ENCODE measurements at regions of chr3 and their contacts with region 1.

Region 1: GRCh38 chr3:30606301-30607031 is at the start of gene TGFBR2:
- DNase-seq: peak; percentile 88
- ATAC-seq: peak; percentile 73
- H3K4me3 Mint-ChIP-seq: peak within 1 kb of the TSS; percentile 93
- H3K27ac Mint-ChIP-seq: peak within 1 kb of the TSS; percentile 98
- H3K4me1 Mint-ChIP-seq: peaks cover 56% of the 10 kb centered on the region
- H3K27me3 Mint-ChIP-seq: no peaks in the 10 kb centered on the region
- total RNA-seq, gene TGFBR2: 86.9 to 92.2 TPM

Region 2: DNA sequence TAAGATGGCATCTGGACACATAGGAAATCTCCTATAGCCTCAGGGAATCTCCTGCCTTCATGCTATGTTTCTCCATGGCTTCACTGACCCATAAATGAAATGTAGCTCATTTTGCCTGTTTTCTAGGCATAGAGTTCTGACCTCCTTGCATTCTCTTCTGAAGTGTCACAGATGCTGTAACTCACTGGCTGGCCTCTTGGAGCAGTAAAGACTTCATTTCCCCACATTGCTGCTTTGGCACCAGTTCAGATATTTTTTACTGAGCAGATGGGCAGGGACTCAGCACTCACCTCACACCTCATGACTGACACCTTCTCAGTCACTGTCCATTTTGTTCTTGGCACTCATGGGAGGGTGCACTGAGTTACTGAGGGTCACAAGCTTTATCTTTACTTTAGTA is 286.8 kb before region 1 on chr3:
- POLR2A ChIA-PET with region 1: no interaction called
- DNase-seq: no peak
- ATAC-seq: peak; percentile 90
- H3K4me3 Mint-ChIP-seq: no peak overlapping the region
- H3K27ac Mint-ChIP-seq: peak overlapping the region; percentile 20
- H3K4me1 Mint-ChIP-seq: peaks cover 4% of the 10 kb centered on the region
- H3K27me3 Mint-ChIP-seq: no peaks in the 10 kb centered on the region

Region 3: GRCh38 chr3:30548600-30548999 is 57.9 kb before region 1 on chr3:
- POLR2A ChIA-PET with region 1: no interaction called
- DNase-seq: peak; percentile 38
- ATAC-seq: peak; percentile 39
- H3K4me3 Mint-ChIP-seq: no peak overlapping the region
- H3K27ac Mint-ChIP-seq: no peak overlapping the region
- H3K4me1 Mint-ChIP-seq: peaks cover 1% of the 10 kb centered on the region
- H3K27me3 Mint-ChIP-seq: no peaks in the 10 kb centered on the region

Region 4: DNA sequence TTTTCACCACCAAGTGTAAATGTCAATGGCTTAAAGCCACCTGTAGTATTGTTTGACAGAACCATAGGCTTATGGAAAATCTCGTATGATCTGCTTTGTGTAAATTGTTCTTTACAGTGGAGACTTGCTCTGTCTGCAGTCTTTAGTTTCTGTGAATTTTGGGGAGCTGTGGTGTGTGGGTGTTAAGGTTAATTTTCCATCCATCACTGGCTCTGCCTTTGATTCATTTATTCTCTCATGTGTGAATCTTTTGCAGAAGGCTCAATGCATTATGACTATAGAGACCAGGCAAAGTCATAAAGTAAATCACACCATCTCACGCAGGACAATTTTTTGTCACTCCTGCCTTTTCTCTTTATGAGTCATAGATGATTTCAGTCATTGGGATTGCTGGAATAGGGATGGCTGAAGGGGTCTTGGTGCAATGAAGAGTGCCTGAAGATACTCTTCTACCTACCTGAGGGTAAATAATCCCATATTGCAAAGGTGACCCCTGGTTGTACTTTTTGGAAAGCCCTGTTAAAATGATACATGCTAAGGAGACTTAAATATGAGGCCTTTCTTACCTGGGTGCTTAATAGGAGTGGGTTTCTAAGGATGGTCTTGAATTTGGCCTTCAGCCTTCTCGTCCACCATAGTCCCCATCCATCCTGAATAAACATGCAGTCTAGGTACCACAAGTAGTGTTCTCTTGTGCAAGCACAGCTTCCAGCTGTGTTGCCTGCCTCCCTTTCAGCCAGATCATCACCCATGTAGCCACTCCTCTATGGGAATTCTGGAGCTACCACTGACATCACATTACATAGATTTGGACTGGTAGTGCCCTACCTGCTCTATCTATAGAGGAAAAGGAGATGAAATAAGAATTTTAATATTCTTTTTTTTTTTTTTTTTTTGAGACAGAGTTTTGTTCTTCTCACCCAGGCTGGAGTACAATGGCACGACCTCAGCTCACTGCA is 14.2 kb after region 1 on chr3:
- POLR2A ChIA-PET with region 1: interaction called, 82 read pairs
- DNase-seq: no peak
- ATAC-seq: peak; percentile 41
- H3K4me3 Mint-ChIP-seq: peak overlapping the region; percentile 65
- H3K27ac Mint-ChIP-seq: peak overlapping the region; percentile 86
- H3K4me1 Mint-ChIP-seq: peaks cover 86% of the 10 kb centered on the region
- H3K27me3 Mint-ChIP-seq: no peaks in the 10 kb centered on the region

Region 5: DNA sequence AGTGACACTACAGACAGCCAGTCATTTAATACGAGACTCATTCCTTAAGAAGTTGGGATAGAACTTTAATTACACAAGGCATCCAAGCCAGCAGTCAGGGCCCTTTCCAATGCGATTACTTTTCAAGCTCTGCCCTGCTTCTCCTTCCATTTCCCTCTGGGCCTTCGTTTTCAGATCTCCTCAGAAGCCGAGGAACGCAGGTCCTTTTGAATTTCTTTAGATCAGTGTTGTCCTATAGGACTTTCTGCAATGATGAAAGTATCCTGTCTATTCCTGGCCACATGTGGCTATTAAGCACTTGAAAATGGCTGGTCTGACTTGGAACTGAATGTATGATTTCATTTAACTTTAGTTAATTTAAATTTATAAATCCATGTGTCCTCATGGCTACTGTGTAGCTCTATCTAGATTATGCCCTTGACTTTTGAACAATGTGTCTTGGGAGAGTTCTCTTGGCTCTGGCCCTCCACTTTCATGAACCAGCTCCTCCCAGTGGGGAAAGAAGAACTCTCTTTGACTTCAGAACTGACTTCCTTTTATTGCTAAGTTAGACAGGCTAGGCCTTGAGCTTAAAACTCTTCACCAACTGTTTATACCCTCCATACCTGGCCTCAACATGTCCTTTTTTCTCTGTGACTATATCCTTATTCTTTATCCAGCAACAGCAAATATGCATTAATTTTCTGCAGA is 22.6 kb after region 1 on chr3:
- POLR2A ChIA-PET with region 1: interaction called, 45 read pairs
- DNase-seq: no peak
- ATAC-seq: peak; percentile 49
- H3K4me3 Mint-ChIP-seq: peak overlapping the region; percentile 61
- H3K27ac Mint-ChIP-seq: peak overlapping the region; percentile 89
- H3K4me1 Mint-ChIP-seq: peaks cover 81% of the 10 kb centered on the region
- H3K27me3 Mint-ChIP-seq: no peaks in the 10 kb centered on the region

Region 6: GRCh38 chr3:30634761-30635735 is 28.6 kb after region 1 on chr3:
- POLR2A ChIA-PET with region 1: interaction called, 45 read pairs
- DNase-seq: no peak
- ATAC-seq: peak; percentile 18
- H3K4me3 Mint-ChIP-seq: peak overlapping the region; percentile 60
- H3K27ac Mint-ChIP-seq: peak overlapping the region; percentile 87
- H3K4me1 Mint-ChIP-seq: peaks cover 86% of the 10 kb centered on the region
- H3K27me3 Mint-ChIP-seq: no peaks in the 10 kb centered on the region

Region 7: GRCh38 chr3:30644593-30645012 is 38.1 kb after region 1 on chr3:
- POLR2A ChIA-PET with region 1: interaction called, 31 read pairs
- DNase-seq: no peak
- ATAC-seq: peak; percentile 48
- H3K4me3 Mint-ChIP-seq: peak overlapping the region; percentile 76
- H3K27ac Mint-ChIP-seq: peak overlapping the region; percentile 95
- H3K4me1 Mint-ChIP-seq: peaks cover 90% of the 10 kb centered on the region
- H3K27me3 Mint-ChIP-seq: no peaks in the 10 kb centered on the region

Region 8: GRCh38 chr3:30658328-30659052 is 52.0 kb after region 1 on chr3:
- POLR2A ChIA-PET with region 1: interaction called, 34 read pairs
- DNase-seq: no peak
- ATAC-seq: peak; percentile 58
- H3K4me3 Mint-ChIP-seq: peak overlapping the region; percentile 82
- H3K27ac Mint-ChIP-seq: peak overlapping the region; percentile 96
- H3K4me1 Mint-ChIP-seq: peaks cover 83% of the 10 kb centered on the region
- H3K27me3 Mint-ChIP-seq: no peaks in the 10 kb centered on the region

Region 9: GRCh38 chr3:30667280-30667651 is 60.8 kb after region 1 on chr3:
- POLR2A ChIA-PET with region 1: interaction called, 11 read pairs
- DNase-seq: no peak
- ATAC-seq: peak; percentile 71
- H3K4me3 Mint-ChIP-seq: peak overlapping the region; percentile 52
- H3K27ac Mint-ChIP-seq: peak overlapping the region; percentile 88
- H3K4me1 Mint-ChIP-seq: peaks cover 78% of the 10 kb centered on the region
- H3K27me3 Mint-ChIP-seq: no peaks in the 10 kb centered on the region